Right ventricle myocardium superior (tissue), 1 donor: ENCODE measurements at regions of chr2 and their contacts with region 1.

Region 1: DNA sequence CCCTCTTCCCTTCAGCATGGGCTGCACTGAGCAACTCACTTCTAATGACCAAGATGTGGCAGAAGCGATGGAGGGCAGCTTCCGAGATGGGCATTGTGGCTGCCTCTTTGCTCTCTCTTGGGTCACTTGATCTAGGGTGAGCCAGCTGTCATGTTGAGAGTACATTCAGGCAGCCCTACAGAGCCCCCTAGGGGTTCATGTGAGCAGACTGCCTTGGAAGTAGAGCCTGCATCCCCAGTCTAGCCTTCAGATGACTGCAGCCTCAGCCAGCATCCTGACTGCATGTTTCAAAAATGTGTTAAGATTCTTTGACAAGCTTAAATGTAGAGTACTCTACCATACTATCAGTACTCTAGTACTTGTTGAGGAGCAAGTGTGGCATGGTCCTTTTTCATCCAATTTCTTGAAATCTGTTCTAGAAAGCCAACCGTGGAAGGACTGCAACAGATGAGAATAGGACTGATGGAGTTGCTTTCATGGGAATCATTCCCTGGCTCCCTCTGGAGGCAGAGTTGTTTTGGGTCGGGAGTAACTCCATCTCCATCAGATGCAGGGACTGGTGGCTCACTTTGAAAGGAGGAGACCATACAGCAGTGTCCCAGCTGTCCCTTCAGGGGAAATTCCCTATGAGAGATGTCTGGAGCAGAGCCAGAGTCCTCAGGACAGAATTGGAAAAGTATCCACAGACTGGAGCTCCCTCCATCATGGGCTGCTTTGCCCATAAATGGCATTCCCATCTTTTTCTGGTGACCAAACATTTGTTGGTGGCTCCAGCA is 144.1 kb downstream of the NCK2 start:
- DNase-seq: no peak
- ATAC-seq: no peak

Region 2: DNA sequence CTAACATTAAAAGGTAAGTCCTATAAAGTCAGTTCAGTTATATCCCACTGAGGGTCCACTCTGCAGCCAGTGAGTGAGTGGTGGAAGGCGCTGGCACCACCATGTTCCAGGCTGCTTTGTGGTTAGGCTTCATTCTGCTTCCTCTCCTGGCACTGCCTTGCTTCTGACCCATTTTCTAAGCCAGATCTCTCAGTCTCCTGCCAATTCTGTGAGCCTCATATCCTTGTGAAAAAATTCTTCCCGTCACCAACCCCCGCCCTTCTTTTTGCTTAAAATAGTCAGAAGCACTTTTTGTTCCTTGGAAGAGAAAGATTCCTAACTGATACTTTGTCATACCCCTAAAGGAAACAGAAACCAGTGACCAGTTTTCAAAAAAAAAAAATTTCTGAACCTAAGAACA is 283.9 kb before region 1 on chr2:
- intact Hi-C with region 1: loop called (anchors 10 kb)
- DNase-seq: no peak
- ATAC-seq: peak; percentile 83

Region 3: DNA sequence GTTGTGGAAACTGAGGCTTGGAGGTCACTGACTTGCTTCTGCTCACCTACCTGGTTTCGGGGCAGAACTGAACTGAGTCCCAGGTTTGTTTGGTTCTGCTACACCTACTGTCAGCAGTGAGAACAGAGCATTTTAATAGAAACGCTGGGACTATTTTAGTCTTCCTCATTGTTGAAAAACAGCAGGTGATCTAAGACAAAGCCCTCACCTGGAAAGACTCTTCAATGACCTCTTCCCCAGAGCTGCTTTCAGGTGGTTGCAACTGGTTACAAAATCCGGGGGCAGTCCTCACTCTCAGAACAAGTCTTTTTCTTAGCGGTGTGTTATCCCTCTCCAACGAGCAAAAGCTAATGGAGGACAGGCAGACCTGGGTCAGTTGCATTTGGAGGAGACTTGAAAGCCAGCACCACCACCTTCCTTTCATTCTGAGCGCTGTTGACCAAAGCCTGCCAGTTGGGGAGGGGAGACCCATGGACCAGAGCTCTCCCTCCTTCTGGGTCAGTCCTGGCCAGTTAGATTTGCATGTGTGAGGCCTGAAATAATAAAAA is 72.9 kb after region 1 on chr2:
- intact Hi-C with region 1: no loop called
- DNase-seq: no peak
- ATAC-seq: no peak